Gastrocnemius medialis (tissue), 4 donors: ENCODE measurements at regions of chr11 and their contacts with region 1.

Region 1: GRCh38 chr11:61899146-61899841 is 7.9 kb upstream of the FADS3 start:
- DNase-seq: peak; percentile 57 to 74
- ATAC-seq: peak; percentile 80 to 88
- H3K4me3 ChIP-seq: no peak overlapping the region
- H3K27ac ChIP-seq: peak overlapping the region in 3 of 4 donors; percentile 1 to 30 (median 29)
- H3K4me1 ChIP-seq: no peaks in the 10 kb centered on the region
- H3K27me3 ChIP-seq: no peaks in the 10 kb centered on the region
- CTCF ChIP-seq: peak; percentile 98 to 100 (median 99)
- POLR2A ChIP-seq: no peak

Region 2: GRCh38 chr11:61871158-61871597 is 28.1 kb before region 1 on chr11:
- in situ Hi-C with region 1: no loop called
- intact Hi-C with region 1: loop called (anchors 1 kb)
- DNase-seq: peak; percentile 47 to 62
- ATAC-seq: peak; percentile 87 to 88
- H3K4me3 ChIP-seq: no peak overlapping the region
- H3K27ac ChIP-seq: peak overlapping the region; percentile 48 to 70 (median 66)
- H3K4me1 ChIP-seq: peaks cover 0 to 5% of the 10 kb centered on the region in 2 donors
- H3K27me3 ChIP-seq: no peaks in the 10 kb centered on the region
- CTCF ChIP-seq: peak; percentile 87 to 96 (median 93)
- POLR2A ChIP-seq: no peak

Region 3: GRCh38 chr11:61954851-61955421 is 55.6 kb after region 1 on chr11:
- in situ Hi-C with region 1: no loop called
- intact Hi-C with region 1: loop called (anchors 2 kb)
- DNase-seq: peak; percentile 65 to 75
- ATAC-seq: peak; percentile 93 to 95
- H3K4me3 ChIP-seq: peak overlapping the region; percentile 42 to 52 (median 49)
- H3K27ac ChIP-seq: peak overlapping the region; percentile 49 to 69 (median 64)
- H3K4me1 ChIP-seq: peaks cover 9 to 14% of the 10 kb centered on the region in 2 donors
- H3K27me3 ChIP-seq: peaks cover 9 to 20% (median 13%) of the 10 kb centered on the region in 3 donors
- CTCF ChIP-seq: peak in 3 of 5 experiments; percentile 18 to 29 (median 29)
- POLR2A ChIP-seq: peak; percentile 18 to 25

Region 4: DNA sequence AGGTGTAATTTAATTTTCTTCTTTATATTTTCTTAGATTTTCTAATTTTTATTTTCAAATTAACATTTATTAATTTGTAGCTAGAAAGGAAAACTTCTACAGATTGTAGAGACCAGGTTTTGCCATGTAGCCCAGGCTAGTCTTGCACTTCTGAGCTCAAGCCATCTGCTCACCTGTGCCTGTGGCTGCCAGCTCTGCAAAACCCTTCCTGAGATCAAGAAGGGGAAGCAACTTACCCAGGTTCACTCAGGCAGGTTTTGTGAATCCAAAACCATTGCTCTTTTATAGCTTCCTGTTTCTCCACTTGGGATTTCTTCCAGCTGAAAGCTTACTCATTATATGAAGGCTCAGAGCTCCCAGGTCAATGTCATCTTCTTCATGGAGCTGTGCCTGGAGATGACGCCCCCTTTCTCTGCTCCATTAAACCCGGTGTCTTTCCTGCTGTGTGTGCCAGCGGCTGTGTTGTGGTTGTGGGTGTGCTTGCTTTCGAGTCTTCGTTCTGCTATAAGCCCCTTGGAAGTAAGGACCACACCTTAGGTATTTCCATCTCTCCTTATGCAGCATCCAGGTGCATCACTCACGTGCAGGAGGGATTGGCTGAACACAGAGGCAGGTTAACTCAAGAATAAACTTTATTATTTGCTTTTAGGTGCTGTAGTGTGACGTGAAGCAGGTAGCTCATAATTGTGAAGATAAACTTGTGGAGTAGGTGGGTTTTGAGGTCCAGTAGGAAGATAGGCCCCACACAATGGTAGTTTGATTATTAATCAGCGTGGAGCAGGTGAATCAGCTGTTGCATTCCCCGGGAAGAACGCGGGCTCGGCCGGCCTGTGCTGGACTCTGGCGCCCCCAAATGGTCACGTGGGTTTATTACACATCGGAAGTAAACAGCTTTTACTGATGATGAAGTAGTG is 182.3 kb after region 1 on chr11:
- in situ Hi-C with region 1: loop called (anchors 5 to 10 kb)
- intact Hi-C with region 1: loop called (anchors 1 kb)
- DNase-seq: peak; percentile 59 to 64
- ATAC-seq: peak; percentile 83 to 88
- H3K4me3 ChIP-seq: no peak overlapping the region
- H3K27ac ChIP-seq: no peak overlapping the region
- H3K4me1 ChIP-seq: peaks cover 0 to 7% of the 10 kb centered on the region in 2 donors
- H3K27me3 ChIP-seq: no peaks in the 10 kb centered on the region
- CTCF ChIP-seq: peak; percentile 79 to 93 (median 91)
- POLR2A ChIP-seq: no peak

Region 5: GRCh38 chr11:62108017-62108750 is 208.9 kb after region 1 on chr11:
- in situ Hi-C with region 1: no loop called
- intact Hi-C with region 1: loop called (anchors 1 kb)
- DNase-seq: no peak
- ATAC-seq: peak; percentile 42 to 79
- H3K4me3 ChIP-seq: no peak overlapping the region
- H3K27ac ChIP-seq: no peak overlapping the region
- H3K4me1 ChIP-seq: peaks cover 15 to 16% of the 10 kb centered on the region in 2 donors
- H3K27me3 ChIP-seq: no peaks in the 10 kb centered on the region
- CTCF ChIP-seq: peak; percentile 52 to 88 (median 83)
- POLR2A ChIP-seq: no peak